MCF 10A (cell line): ENCODE measurements at regions of chr1 and their contacts with region 1.

Region 1: DNA sequence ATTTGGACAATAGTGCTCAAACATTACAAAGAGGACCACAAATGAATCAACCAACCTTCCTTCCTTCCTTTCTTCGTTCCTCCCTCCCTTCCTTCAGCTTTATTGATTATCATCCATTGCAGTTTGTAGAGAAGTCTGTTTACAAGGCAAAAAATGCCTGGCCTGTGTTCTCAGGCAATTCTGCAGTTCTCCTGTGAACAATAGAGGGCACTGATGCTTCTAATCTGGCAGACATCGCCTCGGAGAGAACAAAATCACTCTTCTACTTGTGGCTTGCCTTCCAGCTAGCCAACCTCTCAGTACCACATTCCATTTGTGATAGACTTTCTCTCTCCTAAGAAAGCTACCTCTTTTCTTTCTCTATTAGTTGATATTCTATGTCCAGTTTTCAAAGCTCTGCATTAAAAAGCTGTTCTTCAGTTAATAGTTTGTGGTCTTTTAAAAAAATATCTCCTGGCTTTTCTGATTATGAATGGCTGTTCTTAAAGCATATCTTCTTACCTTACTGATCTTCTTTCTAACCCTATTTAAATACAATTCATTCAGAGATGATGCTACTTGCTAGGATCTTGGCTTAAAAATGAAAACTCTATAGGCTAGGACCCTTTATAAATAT is 26.9 kb upstream of the ESRRG start:
- DNase-seq: peak; percentile 72
- H3K4me3 Mint-ChIP-seq: no peak overlapping the region
- H3K27ac Mint-ChIP-seq: no peak overlapping the region
- H3K4me1 Mint-ChIP-seq: no peaks in the 10 kb centered on the region
- H3K27me3 Mint-ChIP-seq: peaks cover 6% of the 10 kb centered on the region
- CTCF ChIP-seq: peak; percentile 93

Region 2: GRCh38 chr1:216761640-216762039 is 11.5 kb after region 1 on chr1:
- CTCF ChIA-PET with region 1: interaction called, 21 read pairs
- POLR2A ChIA-PET with region 1: no interaction called
- intact Hi-C with region 1: no loop called
- DNase-seq: no peak
- H3K4me3 Mint-ChIP-seq: no peak overlapping the region
- H3K27ac Mint-ChIP-seq: no peak overlapping the region
- H3K4me1 Mint-ChIP-seq: no peaks in the 10 kb centered on the region
- H3K27me3 Mint-ChIP-seq: no peaks in the 10 kb centered on the region
- CTCF ChIP-seq: no peak

Region 3: GRCh38 chr1:217029281-217030157 is 279.4 kb after region 1 on chr1:
- CTCF ChIA-PET with region 1: interaction called, 3 read pairs
- POLR2A ChIA-PET with region 1: no interaction called
- intact Hi-C with region 1: loop called (anchors 5 kb)
- DNase-seq: peak; percentile 95
- H3K4me3 Mint-ChIP-seq: no peak overlapping the region
- H3K27ac Mint-ChIP-seq: peak overlapping the region; percentile 9
- H3K4me1 Mint-ChIP-seq: peaks cover 21% of the 10 kb centered on the region
- H3K27me3 Mint-ChIP-seq: no peaks in the 10 kb centered on the region
- CTCF ChIP-seq: no peak

Region 4: DNA sequence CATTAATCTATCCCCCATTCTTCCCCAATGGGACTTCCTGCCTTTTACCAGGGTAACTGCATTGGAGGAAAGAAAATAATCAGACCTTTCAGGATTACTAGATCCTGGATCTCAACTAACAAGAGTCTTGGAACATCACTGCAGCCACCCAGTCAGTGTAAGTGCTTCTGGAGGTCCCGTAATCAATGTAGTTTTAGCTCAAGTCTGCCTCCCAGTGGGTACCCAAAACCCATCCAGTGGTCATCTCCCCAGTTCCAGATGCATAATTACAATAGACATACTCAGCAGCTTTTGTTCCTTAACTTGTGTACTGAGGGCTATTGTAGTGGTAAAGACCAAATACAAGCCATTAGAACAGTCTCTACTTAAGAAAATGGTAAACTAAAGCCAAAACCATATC is 561.6 kb after region 1 on chr1:
- CTCF ChIA-PET with region 1: no interaction called
- POLR2A ChIA-PET with region 1: no interaction called
- intact Hi-C with region 1: loop called (anchors 1 kb)
- DNase-seq: peak; percentile 44
- H3K4me3 Mint-ChIP-seq: no peak overlapping the region
- H3K27ac Mint-ChIP-seq: no peak overlapping the region
- H3K4me1 Mint-ChIP-seq: peaks cover 11% of the 10 kb centered on the region
- H3K27me3 Mint-ChIP-seq: no peaks in the 10 kb centered on the region
- CTCF ChIP-seq: no peak

Region 5: DNA sequence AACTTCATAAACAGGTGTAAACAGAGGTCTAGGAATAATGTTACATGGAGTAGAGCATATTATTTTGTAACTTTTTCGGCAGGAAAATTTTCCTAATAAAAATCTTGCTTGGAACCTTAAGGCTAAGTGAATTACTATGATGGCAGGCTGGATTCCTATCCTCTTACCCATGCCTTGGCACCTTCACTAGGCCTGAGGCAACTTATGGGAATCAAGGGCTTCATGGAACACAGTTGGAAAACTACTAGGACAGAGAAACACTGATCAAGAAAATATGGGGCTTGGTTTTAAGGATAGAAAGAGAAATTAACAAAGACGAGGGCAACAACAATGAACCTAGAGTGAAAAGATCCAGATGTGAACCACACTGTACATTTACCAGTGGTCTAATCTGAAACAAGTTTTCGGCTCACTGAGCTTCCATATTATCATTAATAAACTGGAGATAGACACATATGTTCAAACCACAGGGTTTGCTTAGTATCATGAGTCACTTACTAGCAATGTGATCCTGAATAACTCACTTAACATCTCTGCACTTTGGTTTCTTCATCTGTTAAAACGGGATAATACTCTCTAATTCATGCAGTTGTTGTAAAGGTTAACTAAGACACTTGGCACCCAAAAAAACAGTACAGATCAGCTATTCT is 812.2 kb after region 1 on chr1:
- CTCF ChIA-PET with region 1: no interaction called
- POLR2A ChIA-PET with region 1: no interaction called
- intact Hi-C with region 1: loop called (anchors 10 kb)
- DNase-seq: peak; percentile 91
- H3K4me3 Mint-ChIP-seq: peak overlapping the region; percentile 60
- H3K27ac Mint-ChIP-seq: peak overlapping the region; percentile 91
- H3K4me1 Mint-ChIP-seq: peaks cover 23% of the 10 kb centered on the region
- H3K27me3 Mint-ChIP-seq: no peaks in the 10 kb centered on the region
- CTCF ChIP-seq: no peak

Region 6: DNA sequence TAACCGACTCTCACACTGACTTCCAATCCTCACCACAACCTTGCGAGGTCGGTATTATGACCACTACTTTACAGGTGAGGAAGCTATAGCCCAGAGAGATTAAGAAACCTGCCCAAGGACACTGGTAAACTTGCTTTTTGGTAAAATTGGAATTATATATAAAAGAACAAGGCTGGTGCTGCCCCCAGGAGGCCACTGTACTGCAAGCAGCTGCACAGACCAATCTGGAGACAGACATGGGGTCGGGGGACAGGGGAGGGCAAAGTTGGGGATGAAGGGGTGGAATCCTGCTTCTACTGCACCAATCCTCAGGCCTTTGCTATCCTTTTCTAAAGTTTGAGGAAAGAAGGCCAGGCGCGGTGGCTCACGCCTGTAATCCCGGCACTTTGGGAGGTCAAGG is 1161.8 kb after region 1 on chr1:
- CTCF ChIA-PET with region 1: interaction called, 3 read pairs
- POLR2A ChIA-PET with region 1: no interaction called
- intact Hi-C with region 1: loop called (anchors 5 kb)
- DNase-seq: peak; percentile 45
- H3K4me3 Mint-ChIP-seq: no peak overlapping the region
- H3K27ac Mint-ChIP-seq: no peak overlapping the region
- H3K4me1 Mint-ChIP-seq: no peaks in the 10 kb centered on the region
- H3K27me3 Mint-ChIP-seq: peaks cover 15% of the 10 kb centered on the region
- CTCF ChIP-seq: peak; percentile 52